ENCODE measurements at regions of chr14 and their contacts with region 1.

Region 1: DNA sequence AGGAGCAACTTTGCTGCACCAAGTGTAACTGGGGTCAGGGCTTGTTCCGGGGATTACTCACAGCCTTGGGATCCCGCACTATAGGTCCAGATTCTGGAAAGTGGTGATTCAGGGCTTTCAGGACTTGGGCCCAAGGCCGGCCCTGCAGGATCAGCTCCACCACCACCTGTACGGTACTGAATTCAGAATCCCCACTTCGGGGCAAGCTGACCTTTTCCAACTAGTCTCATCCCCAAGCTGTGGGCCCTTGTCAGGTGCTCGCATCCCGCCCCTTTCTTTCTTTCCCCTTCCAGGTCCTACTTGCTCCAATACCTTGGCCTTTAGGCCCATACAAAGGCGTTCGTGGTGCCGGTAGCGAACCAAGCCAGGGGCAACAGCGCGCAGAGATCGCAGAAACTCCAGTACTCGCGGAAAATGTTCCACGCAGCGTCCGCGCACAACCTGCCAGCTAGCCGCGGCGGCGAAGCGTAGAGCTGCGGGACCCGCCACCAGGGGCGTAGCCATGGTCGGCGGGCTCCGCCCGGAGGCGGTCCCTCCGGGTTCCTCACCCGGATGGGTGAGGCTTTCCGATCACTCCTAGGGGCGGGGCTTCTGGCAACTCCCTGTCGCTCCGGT is 487 bp downstream of the TINF2 start:
- DNase-seq: peak; percentile 99
- H3K4me3 Mint-ChIP-seq: peak overlapping the region; percentile 99
- H3K27ac Mint-ChIP-seq: peak overlapping the region; percentile 100
- H3K4me1 Mint-ChIP-seq: peaks cover 61% of the 10 kb centered on the region
- H3K27me3 Mint-ChIP-seq: no peaks in the 10 kb centered on the region

Region 2: DNA sequence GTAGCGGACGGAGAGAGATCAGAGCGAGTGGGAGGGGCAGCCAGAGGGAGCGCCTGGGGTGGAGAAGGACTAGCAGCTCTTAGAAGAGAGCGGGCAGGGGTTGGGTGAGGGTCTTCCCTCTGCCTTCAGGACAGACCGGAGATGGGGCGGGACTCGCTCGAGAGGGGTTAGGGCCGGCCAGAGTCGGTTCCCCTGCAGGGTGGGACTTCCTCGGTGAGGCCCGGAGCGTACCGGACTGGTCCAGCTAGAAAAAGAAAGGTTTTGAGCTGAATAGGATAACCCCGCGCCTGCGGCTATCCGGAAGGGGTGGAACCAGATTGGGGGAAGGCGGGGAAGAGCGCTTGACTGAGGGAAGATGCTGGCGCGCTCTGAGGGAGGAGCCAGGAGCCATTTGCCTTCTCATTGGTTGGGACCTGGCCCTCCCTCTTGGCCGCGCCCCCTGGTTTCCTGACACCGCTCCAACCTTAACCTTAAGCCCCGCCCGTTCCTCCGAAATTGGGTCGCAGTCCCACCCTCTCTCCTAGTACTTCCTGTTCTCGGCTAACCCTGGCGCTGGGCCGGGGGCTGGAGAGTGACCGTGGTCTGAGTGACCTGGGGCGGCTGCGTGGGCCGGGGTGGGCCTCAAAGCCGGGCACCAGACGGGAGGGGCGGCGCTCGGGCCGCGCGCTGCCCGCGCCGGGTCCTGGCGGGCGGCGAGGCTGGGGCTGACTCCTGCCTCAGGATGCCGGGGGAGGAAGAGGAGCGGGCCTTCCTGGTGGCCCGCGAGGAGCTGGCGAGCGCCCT is 94.8 kb before region 1 on chr14 and contains the start of gene RNF31:
- intact Hi-C with region 1: loop called (anchors 1 kb)
- DNase-seq: peak; percentile 99
- H3K4me3 Mint-ChIP-seq: peak within 1 kb of the TSS; percentile 97
- H3K27ac Mint-ChIP-seq: peak within 1 kb of the TSS; percentile 99
- H3K4me1 Mint-ChIP-seq: peaks cover 59% of the 10 kb centered on the region
- H3K27me3 Mint-ChIP-seq: no peaks in the 10 kb centered on the region
- total RNA-seq, gene RNF31: 95.1 and 95.6 TPM in 2 replicates

Region 3: DNA sequence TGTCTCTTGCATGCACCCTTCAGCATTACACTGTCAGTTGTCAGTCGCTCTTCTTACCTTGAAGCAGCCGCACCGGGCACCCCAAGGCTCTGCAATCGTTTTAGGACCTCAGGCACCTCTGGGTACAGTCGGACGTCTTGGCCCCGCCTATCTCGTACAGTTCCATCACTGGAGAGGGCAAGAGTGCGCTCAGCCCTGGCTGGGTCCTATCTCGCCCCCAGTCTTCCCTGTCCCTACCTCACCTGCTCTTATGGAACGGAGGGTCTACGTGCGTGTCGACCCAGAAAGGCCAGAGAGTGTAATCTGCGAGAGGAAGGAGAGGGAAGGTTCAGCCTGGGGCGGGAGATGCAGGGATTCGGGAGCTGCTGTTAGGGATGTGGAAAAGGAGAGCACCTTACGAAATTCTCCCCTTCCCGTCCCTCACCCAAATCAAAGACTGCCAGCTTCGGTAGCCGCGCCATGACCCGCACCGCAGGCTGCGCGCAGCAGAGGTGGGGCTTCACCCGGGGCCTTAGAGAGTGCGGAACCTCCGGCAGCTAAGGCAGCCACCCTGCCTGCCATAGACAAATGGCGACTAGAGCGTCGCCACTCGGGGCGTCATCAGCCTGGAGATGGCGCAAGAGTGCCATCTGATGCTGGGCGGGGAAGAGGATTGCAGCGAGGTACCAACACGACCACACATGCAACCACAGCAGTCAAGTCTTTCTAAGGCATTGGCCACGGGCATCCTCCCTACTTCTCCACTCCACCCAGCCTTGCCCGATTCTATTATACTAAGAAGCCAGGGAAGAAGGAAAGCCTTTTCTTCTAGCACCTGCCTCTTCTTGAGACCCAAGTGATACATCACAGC is 26.2 kb before region 1 on chr14 and contains the start of gene MDP1:
- intact Hi-C with region 1: loop called (anchors 1 kb)
- DNase-seq: peak; percentile 96
- H3K4me3 Mint-ChIP-seq: peak within 1 kb of the TSS; percentile 93
- H3K27ac Mint-ChIP-seq: peak within 1 kb of the TSS; percentile 96
- H3K4me1 Mint-ChIP-seq: peaks cover 43% of the 10 kb centered on the region
- H3K27me3 Mint-ChIP-seq: peaks cover 2% of the 10 kb centered on the region
- total RNA-seq, gene MDP1: 11.6 and 13.5 TPM in 2 replicates

Region 4: GRCh38 chr14:24289649-24290249 is 47.8 kb after region 1 on chr14:
- intact Hi-C with region 1: loop called (anchors 2 kb)
- DNase-seq: peak; percentile 79
- H3K4me3 Mint-ChIP-seq: no peak overlapping the region
- H3K27ac Mint-ChIP-seq: no peak overlapping the region
- H3K4me1 Mint-ChIP-seq: peaks cover 22% of the 10 kb centered on the region
- H3K27me3 Mint-ChIP-seq: peaks cover 19% of the 10 kb centered on the region

Region 5: GRCh38 chr14:24310646-24311604 is 69.0 kb after region 1 on chr14 and contains the start of gene LTB4R:
- intact Hi-C with region 1: loop called (anchors 2 kb)
- DNase-seq: peak; percentile 89
- H3K4me3 Mint-ChIP-seq: peak within 1 kb of the TSS; percentile 86
- H3K27ac Mint-ChIP-seq: peak within 1 kb of the TSS; percentile 91
- H3K4me1 Mint-ChIP-seq: peaks cover 68% of the 10 kb centered on the region
- H3K27me3 Mint-ChIP-seq: no peaks in the 10 kb centered on the region
- total RNA-seq, gene LTB4R: 12.2 and 14.2 TPM in 2 replicates

Region 6: GRCh38 chr14:24398653-24399446 is 156.9 kb after region 1 on chr14 and contains the start of gene NYNRIN:
- intact Hi-C with region 1: no loop called
- DNase-seq: peak; percentile 78
- H3K4me3 Mint-ChIP-seq: peak within 1 kb of the TSS; percentile 69
- H3K27ac Mint-ChIP-seq: no peak within 1 kb of the TSS
- H3K4me1 Mint-ChIP-seq: peaks cover 6% of the 10 kb centered on the region
- H3K27me3 Mint-ChIP-seq: peaks cover 41% of the 10 kb centered on the region
- total RNA-seq, gene NYNRIN: not detected in 2 replicates

Region 7: DNA sequence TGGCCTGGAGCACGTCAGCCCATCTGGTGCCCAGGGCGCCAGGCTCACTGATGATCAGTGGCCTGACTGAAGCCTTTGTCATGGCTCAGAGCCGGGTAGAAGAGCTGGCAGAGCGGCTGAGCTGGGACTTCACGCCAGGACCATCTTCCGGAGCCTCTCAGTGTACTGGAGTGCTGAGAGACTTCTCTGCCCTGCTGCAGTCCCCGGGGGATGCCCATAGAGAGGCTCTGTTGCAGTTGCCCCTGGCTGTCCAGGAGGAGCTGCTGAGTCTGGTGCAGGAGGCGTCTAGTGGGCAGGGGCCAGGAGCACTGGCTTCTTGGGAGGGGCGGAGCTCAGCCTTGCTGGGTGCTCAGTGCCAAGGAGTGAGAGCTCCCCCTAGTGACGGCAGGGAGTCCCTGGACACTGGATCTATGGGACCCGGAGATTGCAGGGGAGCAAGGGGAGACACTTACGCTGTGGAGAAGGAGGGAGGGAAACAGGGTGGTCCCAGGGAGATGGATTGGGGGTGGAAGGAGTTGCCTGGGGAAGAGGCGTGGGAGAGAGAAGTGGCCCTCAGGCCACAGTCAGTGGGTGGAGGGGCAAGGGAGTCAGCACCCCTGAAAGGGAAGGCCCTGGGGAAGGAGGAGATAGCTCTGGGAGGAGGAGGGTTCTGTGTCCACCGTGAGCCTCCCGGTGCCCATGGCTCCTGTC is 189.8 kb after region 1 on chr14:
- intact Hi-C with region 1: loop called (anchors 1 kb)
- DNase-seq: peak; percentile 97
- H3K4me3 Mint-ChIP-seq: peak overlapping the region; percentile 92
- H3K27ac Mint-ChIP-seq: peak overlapping the region; percentile 94
- H3K4me1 Mint-ChIP-seq: peaks cover 45% of the 10 kb centered on the region
- H3K27me3 Mint-ChIP-seq: no peaks in the 10 kb centered on the region

Region 8: GRCh38 chr14:24463017-24463883 is 221.3 kb after region 1 on chr14:
- intact Hi-C with region 1: no loop called
- DNase-seq: no peak
- H3K4me3 Mint-ChIP-seq: no peak overlapping the region
- H3K27ac Mint-ChIP-seq: no peak overlapping the region
- H3K4me1 Mint-ChIP-seq: peaks cover 3% of the 10 kb centered on the region
- H3K27me3 Mint-ChIP-seq: no peaks in the 10 kb centered on the region